OCI-LY7 (cell line): ENCODE measurements at regions of chr9 and their contacts with region 1.

Region 1: GRCh38 chr9:35882263-35882848 is 12.2 kb upstream of the OR13J1 start:
- DNase-seq: peak; percentile 76
- H3K4me3 ChIP-seq: no peak overlapping the region
- H3K27ac ChIP-seq: no peak overlapping the region
- H3K4me1 ChIP-seq: no peaks in the 10 kb centered on the region
- CTCF ChIP-seq: peak; percentile 100

Region 2: DNA sequence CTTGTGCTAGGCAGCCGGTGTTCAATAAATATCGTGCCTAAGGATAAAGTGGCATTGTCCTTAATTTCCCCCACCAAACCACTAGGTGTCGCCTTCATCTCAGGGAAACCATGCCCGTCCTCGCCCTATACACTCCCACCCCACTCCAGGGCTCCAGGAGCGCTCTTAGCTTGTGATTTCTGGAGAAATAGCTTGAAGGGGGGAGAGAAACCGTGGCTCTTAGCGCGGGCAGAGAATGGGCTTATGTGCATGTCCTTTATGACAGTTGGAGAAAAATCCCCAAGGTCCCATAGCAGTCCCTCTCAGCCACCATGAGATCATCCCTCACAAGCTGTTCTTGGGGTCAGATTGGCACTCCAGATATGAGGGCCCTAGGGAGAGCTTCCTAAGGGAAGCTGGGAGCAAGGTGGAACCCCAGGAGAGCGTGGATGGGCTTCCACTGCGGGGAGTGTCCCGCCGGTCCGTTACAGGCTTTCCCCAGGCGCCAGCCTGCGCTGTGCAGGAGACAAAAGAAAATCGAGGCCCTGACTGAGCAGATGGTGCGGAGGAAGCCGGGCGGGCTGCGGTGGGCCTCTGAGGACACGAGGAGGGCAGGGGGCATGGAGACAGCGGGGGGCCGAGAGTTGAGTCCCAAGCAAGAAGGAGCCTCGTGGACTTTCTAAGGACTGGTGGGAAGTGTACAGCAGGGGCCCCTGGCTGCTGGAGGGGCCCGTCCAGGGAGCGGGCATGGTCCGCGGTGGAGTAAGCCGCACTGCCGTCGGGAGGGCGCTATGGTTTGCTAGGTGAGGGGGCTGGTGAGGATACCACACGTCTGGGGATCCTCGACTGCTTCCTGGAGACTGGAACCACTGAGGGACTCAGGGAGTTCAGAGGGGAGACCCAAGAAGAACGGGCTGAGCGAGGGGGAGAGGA is 91.7 kb before region 1 on chr9:
- CTCF ChIA-PET with region 1: interaction called, 5 read pairs
- POLR2A ChIA-PET with region 1: no interaction called
- intact Hi-C with region 1: loop called (anchors 1 kb)
- DNase-seq: peak; percentile 73
- H3K4me3 ChIP-seq: no peak overlapping the region
- H3K27ac ChIP-seq: no peak overlapping the region
- H3K4me1 ChIP-seq: peaks cover 12% of the 10 kb centered on the region
- CTCF ChIP-seq: peak; percentile 95

Region 3: GRCh38 chr9:35829084-35829763 is 53.1 kb before region 1 on chr9 and contains the start of gene TMEM8B:
- CTCF ChIA-PET with region 1: interaction called, 3 read pairs
- POLR2A ChIA-PET with region 1: interaction called, 3 read pairs
- intact Hi-C with region 1: loop called (anchors 1 kb)
- DNase-seq: peak; percentile 94
- H3K4me3 ChIP-seq: peak within 1 kb of the TSS; percentile 72
- H3K27ac ChIP-seq: no peak within 1 kb of the TSS
- H3K4me1 ChIP-seq: peaks cover 32% of the 10 kb centered on the region
- CTCF ChIP-seq: no peak
- total RNA-seq, gene TMEM8B: 3.1 and 3.2 TPM in 2 replicates